Mammary epithelial cell (primary cell): ENCODE measurements at regions of chr20 and their contacts with region 1.

Region 1: DNA sequence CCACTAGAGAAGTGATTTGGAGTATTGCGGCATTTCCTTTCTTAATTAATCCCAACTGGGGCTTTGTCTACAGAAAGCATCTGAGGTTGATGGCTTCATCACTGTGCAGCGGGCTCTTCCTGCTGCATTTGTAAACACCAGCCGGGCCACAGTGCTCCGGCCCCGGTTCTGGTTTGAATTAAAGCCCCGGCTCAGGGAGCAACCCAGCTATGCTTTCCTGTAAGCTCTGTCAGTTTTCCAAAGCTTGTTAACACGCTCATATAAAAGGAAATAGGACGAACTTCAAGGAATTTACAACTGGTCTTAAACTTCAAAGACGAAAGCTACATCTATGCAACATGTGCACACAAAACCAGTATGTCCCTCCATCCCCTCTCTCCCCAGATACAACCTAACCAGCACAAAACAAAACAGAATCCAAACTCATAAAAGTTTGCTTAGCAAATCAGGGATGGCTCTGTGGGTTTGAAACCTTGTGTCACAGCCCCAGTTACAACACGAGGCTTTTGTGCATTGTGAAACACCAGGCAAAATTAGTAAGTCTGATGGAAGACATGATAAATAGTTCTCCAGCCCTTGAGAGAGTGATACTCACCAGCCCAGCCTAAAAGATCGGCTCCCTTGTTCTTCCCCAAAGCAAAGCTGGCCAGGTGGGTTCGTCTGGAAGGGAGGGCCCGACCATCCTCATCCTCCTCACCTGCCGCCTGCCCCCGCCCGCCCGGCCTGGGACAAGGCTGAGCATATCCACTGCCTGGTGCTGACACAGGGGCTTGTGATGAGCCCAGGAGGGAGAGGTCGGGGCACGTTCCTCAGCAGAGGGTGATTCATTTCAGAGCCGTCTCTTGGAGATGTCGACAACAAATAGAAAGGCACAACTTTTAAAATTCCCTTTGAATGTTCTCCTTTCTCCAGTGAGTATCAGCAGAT is 197.9 kb downstream of the TFAP2C start:
- DNase-seq: peak; percentile 95
- H3K4me3 ChIP-seq: peak overlapping the region in 2 of 3 experiments; percentile 27 to 38
- H3K27ac ChIP-seq: peak overlapping the region; percentile 87
- H3K4me1 ChIP-seq: peaks cover 23% of the 10 kb centered on the region
- H3K27me3 ChIP-seq: no peaks in the 10 kb centered on the region
- CTCF ChIP-seq: no peak

Region 2: GRCh38 chr20:56636716-56637115 is 190.3 kb before region 1 on chr20:
- CTCF ChIA-PET with region 1: no interaction called
- dilution Hi-C with region 1: no loop called
- in situ Hi-C with region 1: no loop called
- intact Hi-C with region 1: loop called (anchors 1 kb)
- DNase-seq: peak; percentile 92
- H3K4me3 ChIP-seq: no peak overlapping the region
- H3K27ac ChIP-seq: peak overlapping the region; percentile 73
- H3K4me1 ChIP-seq: peaks cover 54% of the 10 kb centered on the region
- H3K27me3 ChIP-seq: no peaks in the 10 kb centered on the region
- CTCF ChIP-seq: no peak

Region 3: GRCh38 chr20:56653221-56653620 is 173.7 kb before region 1 on chr20:
- CTCF ChIA-PET with region 1: no interaction called
- dilution Hi-C with region 1: no loop called
- in situ Hi-C with region 1: no loop called
- intact Hi-C with region 1: no loop called
- DNase-seq: peak; percentile 26
- H3K4me3 ChIP-seq: no peak overlapping the region
- H3K27ac ChIP-seq: no peak overlapping the region
- H3K4me1 ChIP-seq: no peaks in the 10 kb centered on the region
- H3K27me3 ChIP-seq: no peaks in the 10 kb centered on the region
- CTCF ChIP-seq: no peak

Region 4: GRCh38 chr20:56788040-56788983 is 38.7 kb before region 1 on chr20:
- CTCF ChIA-PET with region 1: no interaction called
- dilution Hi-C with region 1: no loop called
- in situ Hi-C with region 1: no loop called
- intact Hi-C with region 1: loop called (anchors 1 kb)
- DNase-seq: peak; percentile 85
- H3K4me3 ChIP-seq: no peak overlapping the region
- H3K27ac ChIP-seq: peak overlapping the region; percentile 99
- H3K4me1 ChIP-seq: peaks cover 18% of the 10 kb centered on the region
- H3K27me3 ChIP-seq: no peaks in the 10 kb centered on the region
- CTCF ChIP-seq: no peak

Region 5: GRCh38 chr20:56909918-56910714 is 83.1 kb after region 1 on chr20:
- CTCF ChIA-PET with region 1: no interaction called
- dilution Hi-C with region 1: loop called (anchors 5 kb)
- in situ Hi-C with region 1: no loop called
- intact Hi-C with region 1: no loop called
- DNase-seq: no peak
- H3K4me3 ChIP-seq: no peak overlapping the region
- H3K27ac ChIP-seq: no peak overlapping the region
- H3K4me1 ChIP-seq: no peaks in the 10 kb centered on the region
- H3K27me3 ChIP-seq: no peaks in the 10 kb centered on the region
- CTCF ChIP-seq: no peak

Region 6: DNA sequence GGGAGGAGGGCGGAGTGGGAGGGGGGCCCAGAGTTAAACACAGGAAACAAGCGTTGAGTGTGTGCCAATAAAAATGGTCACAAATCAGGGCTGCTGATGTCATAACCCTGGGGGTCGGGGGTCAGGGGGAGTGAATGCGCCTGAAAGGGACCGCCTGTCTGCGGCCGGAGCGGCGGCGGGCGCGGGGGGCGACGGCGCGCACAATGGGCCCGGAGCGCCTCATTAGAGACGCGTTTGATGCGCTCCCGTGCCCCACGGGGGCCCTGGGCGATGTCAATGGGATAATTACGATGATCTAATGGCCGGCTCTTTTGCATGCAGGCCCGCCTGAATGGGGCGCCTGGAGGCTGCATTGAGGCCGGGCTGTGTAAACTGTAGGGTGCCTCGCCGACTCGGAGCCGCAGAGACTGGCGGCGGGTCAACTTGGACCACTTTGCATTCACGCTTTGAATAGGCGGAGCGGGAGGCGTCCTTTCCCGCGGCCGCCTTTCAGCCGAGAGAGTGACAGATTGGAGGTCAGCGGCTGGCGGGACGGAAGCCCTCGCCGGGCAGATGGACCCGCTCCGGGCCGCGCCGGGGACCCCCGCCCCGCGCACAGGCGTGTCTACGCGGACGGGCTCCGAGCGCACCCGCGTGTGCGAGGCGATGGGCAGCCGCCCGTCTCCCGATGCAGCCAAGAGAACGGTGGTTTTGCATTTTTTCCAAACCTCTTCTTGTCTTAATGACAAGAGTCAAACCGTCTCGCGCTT is 98.3 kb after region 1 on chr20:
- CTCF ChIA-PET with region 1: no interaction called
- dilution Hi-C with region 1: no loop called
- in situ Hi-C with region 1: no loop called
- intact Hi-C with region 1: no loop called
- DNase-seq: no peak
- H3K4me3 ChIP-seq: peak overlapping the region; percentile 23 to 37 (median 36)
- H3K27ac ChIP-seq: no peak overlapping the region
- H3K4me1 ChIP-seq: peaks cover 9% of the 10 kb centered on the region
- H3K27me3 ChIP-seq: peaks cover 19% of the 10 kb centered on the region
- CTCF ChIP-seq: no peak

Region 7: GRCh38 chr20:56987989-56988388 is 161.0 kb after region 1 on chr20:
- CTCF ChIA-PET with region 1: no interaction called
- dilution Hi-C with region 1: no loop called
- in situ Hi-C with region 1: no loop called
- intact Hi-C with region 1: no loop called
- DNase-seq: peak; percentile 35
- H3K4me3 ChIP-seq: no peak overlapping the region
- H3K27ac ChIP-seq: no peak overlapping the region
- H3K4me1 ChIP-seq: no peaks in the 10 kb centered on the region
- H3K27me3 ChIP-seq: no peaks in the 10 kb centered on the region
- CTCF ChIP-seq: no peak